ENCODE measurements at regions of chr11 and their contacts with region 1.

Region 1: DNA sequence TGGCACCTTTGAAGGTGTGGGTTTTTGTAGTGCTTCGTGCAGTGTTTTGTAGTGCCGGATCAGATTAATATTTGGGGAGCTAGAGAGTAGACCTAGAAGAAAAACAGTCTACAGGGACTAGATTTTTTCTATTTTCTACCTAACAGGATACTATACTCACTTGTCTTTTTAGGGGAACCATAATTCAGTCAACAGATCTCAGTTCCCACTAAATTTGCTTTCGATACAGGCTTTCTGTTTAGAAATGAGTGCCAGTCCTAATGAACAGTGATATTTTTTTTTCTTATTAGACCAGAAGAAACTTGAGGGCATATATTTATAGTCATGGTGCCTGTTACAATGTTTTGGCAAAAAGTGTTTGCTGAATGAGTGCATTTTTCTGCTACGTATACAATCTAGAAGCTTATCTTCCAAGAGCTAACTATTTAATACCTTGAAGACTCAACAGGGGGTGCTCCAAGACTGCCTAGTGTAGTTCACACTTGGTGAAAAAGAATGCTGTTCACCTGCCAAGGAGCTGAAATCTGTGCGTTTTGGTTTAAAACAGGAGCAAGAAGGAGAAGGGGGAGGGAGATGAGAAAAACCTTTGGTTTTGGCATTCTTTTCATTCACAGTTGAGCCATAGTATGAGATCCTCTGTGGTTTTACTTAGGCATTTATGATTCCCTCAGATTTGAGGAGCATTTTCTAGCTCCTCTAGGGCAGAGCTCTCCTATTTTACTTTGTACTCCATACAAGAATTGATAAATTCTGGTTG is 44.9 kb upstream of the VSTM5 start:
- DNase-seq: no peak
- ATAC-seq: no peak

Region 2: DNA sequence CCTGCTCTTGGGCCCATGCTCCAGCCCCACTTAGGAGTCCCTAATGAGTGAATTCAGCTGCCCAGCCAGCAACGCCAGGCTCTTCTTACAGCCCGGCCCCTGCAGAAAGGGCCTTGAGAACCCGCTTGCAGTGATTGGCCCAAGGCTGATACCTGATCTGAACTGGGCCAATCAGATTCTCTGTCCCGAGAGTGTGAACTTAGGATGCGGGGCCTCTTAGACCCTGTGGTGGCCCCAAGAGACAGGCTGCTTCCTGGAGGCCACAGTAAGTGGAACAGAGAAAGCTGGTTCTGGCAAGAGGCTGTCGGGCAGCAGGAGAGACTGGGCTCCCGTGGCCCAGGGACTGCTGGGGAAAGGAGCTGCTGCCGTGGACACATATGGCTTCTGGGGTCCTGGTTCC is 56.3 kb before region 1 on chr11:
- intact Hi-C with region 1: no loop called
- DNase-seq: no peak
- ATAC-seq: no peak

Region 3: GRCh38 chr11:94417386-94417987 is 522.2 kb after region 1 on chr11:
- intact Hi-C with region 1: loop called (anchors 5 kb)
- DNase-seq: no peak
- ATAC-seq: no peak

Region 4: DNA sequence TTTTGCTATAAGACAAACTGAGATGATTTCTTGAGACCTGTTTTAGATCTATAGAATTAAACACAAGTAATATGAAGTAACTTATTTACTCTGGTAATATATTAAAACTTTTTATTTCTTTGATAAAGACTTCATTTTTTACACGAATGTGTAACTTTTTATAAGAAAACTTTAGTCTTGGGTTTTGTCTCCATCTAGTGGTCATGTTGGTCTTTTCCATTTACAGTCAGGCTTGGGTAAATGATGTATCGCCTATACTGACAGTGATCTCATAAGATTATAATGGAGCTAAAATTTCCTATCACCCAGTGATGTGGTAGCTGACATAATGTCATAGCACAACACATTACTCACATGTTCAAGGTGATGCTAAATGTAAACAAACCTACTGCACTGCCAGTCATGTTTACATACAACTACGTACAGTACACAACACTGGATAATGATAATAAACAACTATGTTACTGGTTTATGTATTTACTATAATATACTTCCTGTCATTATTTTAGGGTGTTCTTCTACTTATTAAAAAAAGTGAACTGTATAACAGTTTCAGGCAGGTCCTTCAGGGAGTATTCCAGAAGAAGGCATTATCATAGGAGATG is 609.5 kb after region 1 on chr11:
- intact Hi-C with region 1: loop called (anchors 5 kb)
- DNase-seq: no peak
- ATAC-seq: no peak